ENCODE measurements at regions of chr1 and their contacts with region 1.

Region 1: DNA sequence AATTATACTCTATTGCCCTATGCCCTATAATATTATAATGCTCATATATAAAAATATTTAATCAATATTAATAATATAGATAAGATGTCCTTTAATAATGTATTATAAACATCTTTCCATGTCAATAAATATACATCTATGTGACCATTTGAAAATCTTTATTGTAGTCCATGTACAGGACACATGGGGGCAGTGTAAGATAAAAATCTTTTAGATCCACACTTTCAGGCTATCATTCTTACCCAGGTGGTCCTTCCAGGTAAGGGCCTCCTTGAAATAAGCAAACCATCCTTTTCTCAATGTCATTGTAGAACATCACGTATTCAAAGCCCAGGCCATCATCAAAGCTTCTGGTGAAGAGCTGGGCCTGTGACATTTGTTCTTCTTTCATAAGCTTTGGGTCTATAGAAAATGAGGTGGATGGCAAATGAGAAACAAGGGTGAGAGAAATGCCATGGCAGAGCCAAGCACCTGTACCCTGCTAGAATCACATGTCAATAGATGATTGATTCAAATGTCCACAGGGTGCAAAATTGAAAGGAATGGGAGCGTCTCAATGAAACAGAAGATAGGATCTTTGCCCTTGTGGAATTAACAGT is 20.2 kb downstream of the THEM4 start:
- DNase-seq: no peak
- H3K4me3 ChIP-seq: no peak overlapping the region
- H3K27ac ChIP-seq: no peak overlapping the region
- H3K4me1 ChIP-seq: peaks cover 30% of the 10 kb centered on the region
- H3K27me3 ChIP-seq: no peaks in the 10 kb centered on the region
- CTCF ChIP-seq: peak; percentile 15 to 49

Region 2: DNA sequence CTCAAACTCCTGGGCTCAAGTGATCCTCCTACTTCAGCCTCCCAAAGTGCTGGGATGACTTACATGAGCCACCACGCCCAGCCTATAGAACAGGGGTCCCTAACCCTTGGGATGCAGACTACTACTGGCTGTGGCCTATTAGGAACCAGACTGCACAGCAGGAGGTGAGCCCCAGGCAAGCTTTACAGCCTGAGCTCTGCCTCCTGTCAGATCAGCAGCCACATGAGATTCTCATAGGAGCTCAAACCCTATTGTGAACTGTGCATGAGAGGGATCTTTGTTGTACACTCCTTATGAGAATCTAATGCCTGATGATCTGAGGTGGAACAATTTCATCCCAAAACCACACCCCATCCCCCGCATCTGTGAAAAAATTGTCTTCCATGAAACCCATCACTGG is 503.1 kb before region 1 on chr1:
- CTCF ChIA-PET with region 1: no interaction called
- dilution Hi-C with region 1: no loop called
- in situ Hi-C with region 1: no loop called
- intact Hi-C with region 1: no loop called
- DNase-seq: no peak
- H3K4me3 ChIP-seq: no peak overlapping the region
- H3K27ac ChIP-seq: no peak overlapping the region
- H3K4me1 ChIP-seq: peaks cover 9% of the 10 kb centered on the region
- H3K27me3 ChIP-seq: no peaks in the 10 kb centered on the region
- CTCF ChIP-seq: no peak

Region 3: GRCh38 chr1:151867785-151868411 is 21.2 kb before region 1 on chr1:
- CTCF ChIA-PET with region 1: no interaction called
- dilution Hi-C with region 1: no loop called
- in situ Hi-C with region 1: no loop called
- intact Hi-C with region 1: loop called (anchors 2 kb)
- DNase-seq: peak; percentile 83
- H3K4me3 ChIP-seq: no peak overlapping the region
- H3K27ac ChIP-seq: peak overlapping the region; percentile 23
- H3K4me1 ChIP-seq: peaks cover 16% of the 10 kb centered on the region
- H3K27me3 ChIP-seq: no peaks in the 10 kb centered on the region
- CTCF ChIP-seq: no peak